A673 (cell line): ENCODE measurements at regions of chr18 and their contacts with region 1.

Region 1: DNA sequence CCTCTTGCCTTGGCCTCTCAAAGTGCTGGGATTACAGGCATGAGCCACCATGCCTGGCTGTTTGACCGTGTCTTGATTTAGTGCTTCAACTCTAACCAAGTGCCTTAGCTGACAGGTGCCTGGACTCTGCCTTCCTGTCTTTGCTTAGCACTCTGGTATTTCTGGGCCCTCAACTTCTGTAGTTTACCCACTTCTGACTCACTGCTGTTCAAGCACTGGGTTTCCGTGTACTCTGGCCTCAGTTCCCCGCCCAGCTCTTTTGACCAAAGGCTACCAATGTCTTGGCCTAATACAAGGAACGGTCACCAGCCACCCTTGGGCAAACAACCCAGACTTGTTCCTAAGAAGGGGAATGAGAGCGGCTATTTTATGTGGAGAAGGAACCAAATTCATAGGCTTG is 35.7 kb upstream of the CABLES1 start:
- DNase-seq: no peak
- H3K4me3 ChIP-seq: no peak overlapping the region
- H3K27ac ChIP-seq: no peak overlapping the region
- H3K4me1 ChIP-seq: peaks cover 9% of the 10 kb centered on the region
- H3K27me3 ChIP-seq: no peaks in the 10 kb centered on the region
- CTCF ChIP-seq: no peak

Region 2: DNA sequence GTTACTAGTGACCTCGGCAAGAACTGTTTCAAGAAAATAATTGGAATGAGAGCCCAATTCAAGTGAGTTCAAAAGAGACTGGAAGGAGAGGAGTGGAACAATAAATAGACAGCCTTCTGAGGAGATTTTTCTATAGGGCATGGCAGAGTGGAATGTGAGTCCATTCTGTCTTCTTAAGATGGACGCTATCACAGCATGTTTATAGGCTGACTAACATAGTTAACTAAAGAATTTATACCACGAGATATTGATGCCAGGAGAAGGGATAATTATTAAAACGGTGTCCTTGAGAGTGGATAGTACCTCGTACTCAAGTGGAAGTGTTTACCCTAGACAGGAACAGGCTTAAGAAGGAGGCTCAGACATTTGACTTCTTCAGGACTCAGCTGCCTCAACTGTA is 310.0 kb before region 1 on chr18:
- CTCF ChIA-PET with region 1: no interaction called
- POLR2A ChIA-PET with region 1: no interaction called
- intact Hi-C with region 1: no loop called
- DNase-seq: no peak
- H3K4me3 ChIP-seq: no peak overlapping the region
- H3K27ac ChIP-seq: no peak overlapping the region
- H3K4me1 ChIP-seq: no peaks in the 10 kb centered on the region
- H3K27me3 ChIP-seq: peaks cover 27% of the 10 kb centered on the region
- CTCF ChIP-seq: no peak

Region 3: GRCh38 chr18:23259701-23260582 is 160.3 kb after region 1 on chr18:
- CTCF ChIA-PET with region 1: no interaction called
- POLR2A ChIA-PET with region 1: interaction called, 11 read pairs
- intact Hi-C with region 1: no loop called
- DNase-seq: peak; percentile 98
- H3K4me3 ChIP-seq: peak overlapping the region; percentile 5
- H3K27ac ChIP-seq: peak overlapping the region; percentile 83
- H3K4me1 ChIP-seq: peaks cover 37% of the 10 kb centered on the region
- H3K27me3 ChIP-seq: no peaks in the 10 kb centered on the region
- CTCF ChIP-seq: no peak

Region 4: GRCh38 chr18:24315170-24315569 is 1215.5 kb after region 1 on chr18:
- CTCF ChIA-PET with region 1: no interaction called
- POLR2A ChIA-PET with region 1: no interaction called
- intact Hi-C with region 1: no loop called
- DNase-seq: no peak
- H3K4me3 ChIP-seq: no peak overlapping the region
- H3K27ac ChIP-seq: no peak overlapping the region
- H3K4me1 ChIP-seq: no peaks in the 10 kb centered on the region
- H3K27me3 ChIP-seq: no peaks in the 10 kb centered on the region
- CTCF ChIP-seq: no peak